Caki2 (cell line): ENCODE measurements at regions of chr22 and their contacts with region 1.

Region 1: GRCh38 chr22:40567106-40567505 is 69.4 kb downstream of the MRTFA start:
- DNase-seq: peak; percentile 81

Region 2: GRCh38 chr22:40533712-40534378 is 33.3 kb before region 1 on chr22:
- in situ Hi-C with region 1: loop called (anchors 5 kb)
- DNase-seq: peak; percentile 64